ENCODE measurements at regions of chr1 and their contacts with region 1.

Region 1: DNA sequence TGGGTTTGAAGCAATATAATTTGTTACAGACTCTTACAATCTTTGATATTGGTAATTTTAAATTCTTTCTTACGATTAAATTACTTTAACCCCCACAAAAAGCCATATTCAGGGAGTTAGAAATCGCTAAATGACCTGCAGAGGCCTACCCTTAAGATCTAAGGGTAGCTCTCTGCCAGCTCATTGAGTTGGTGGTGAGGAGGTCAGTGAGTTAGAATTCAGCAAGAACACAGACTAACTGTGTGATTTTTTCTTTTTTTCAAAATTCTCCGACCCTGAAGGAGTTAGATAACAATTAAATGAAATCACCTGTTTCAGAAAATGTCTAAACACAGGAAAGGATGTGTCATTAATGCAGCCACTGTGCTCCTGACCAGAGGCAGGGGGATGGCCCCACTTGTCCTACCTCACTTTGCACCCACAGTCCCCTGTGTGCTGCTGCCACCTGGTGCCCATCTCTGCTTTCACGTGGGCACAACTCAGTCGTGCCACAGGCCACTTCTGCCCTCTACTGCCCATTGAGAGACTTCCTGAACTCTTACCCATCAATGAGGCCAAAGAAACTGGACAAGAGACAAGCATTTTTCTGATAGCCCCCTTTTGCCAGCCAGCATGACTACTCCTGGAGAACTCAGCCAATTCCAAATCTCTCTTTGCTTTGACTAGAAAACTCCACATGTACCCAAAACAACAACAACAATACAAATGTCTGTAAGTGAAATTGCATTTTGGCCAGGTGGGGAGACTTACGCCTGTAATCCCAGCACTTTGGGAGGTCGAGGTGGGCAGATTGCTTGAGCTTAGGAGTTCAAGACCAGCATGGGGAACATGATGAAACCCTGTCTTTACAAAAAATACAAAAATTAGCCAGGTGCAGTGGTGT is 8.4 kb downstream of the CFAP45 start:
- DNase-seq: peak; percentile 82
- H3K4me3 Mint-ChIP-seq: no peak overlapping the region
- H3K27ac Mint-ChIP-seq: no peak overlapping the region
- H3K4me1 Mint-ChIP-seq: peaks cover 19% of the 10 kb centered on the region
- H3K27me3 Mint-ChIP-seq: peaks cover 12% of the 10 kb centered on the region

Region 2: GRCh38 chr1:159780583-159781582 is 110.6 kb before region 1 on chr1 and contains the start of gene DUSP23:
- CTCF ChIA-PET with region 1: interaction called, 32 read pairs
- POLR2A ChIA-PET with region 1: interaction called, 5 read pairs
- DNase-seq: peak; percentile 97
- H3K4me3 Mint-ChIP-seq: peak within 1 kb of the TSS; percentile 79
- H3K27ac Mint-ChIP-seq: peak within 1 kb of the TSS; percentile 44
- H3K4me1 Mint-ChIP-seq: peaks cover 34% of the 10 kb centered on the region
- H3K27me3 Mint-ChIP-seq: no peaks in the 10 kb centered on the region
- total RNA-seq, gene DUSP23: 22.7 to 24.6 TPM

Region 3: DNA sequence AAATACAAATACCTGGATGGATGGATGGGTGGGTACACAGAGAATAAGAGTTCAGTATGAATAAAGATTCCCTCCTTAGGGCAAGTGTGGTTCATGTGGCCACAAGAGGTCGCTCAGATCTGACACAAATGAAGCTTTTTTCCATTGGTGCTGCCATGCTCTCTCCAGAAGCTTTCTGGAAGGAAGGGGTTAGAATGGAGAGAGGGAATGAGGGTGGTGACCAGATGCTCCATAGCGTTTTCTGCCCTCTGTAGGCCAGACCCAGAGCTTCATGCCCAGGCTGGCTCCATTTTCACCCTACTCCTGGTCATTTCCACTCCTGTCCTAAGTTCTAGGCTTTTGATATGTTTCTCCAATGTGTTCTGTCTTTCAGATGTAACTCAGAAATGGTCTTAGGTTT is 92.6 kb before region 1 on chr1:
- CTCF ChIA-PET with region 1: interaction called, 221 read pairs
- POLR2A ChIA-PET with region 1: interaction called, 11 read pairs
- DNase-seq: peak; percentile 52
- H3K4me3 Mint-ChIP-seq: no peak overlapping the region
- H3K27ac Mint-ChIP-seq: no peak overlapping the region
- H3K4me1 Mint-ChIP-seq: peaks cover 16% of the 10 kb centered on the region
- H3K27me3 Mint-ChIP-seq: peaks cover 41% of the 10 kb centered on the region

Region 4: GRCh38 chr1:159854693-159855192 is 36.8 kb before region 1 on chr1:
- CTCF ChIA-PET with region 1: interaction called, 21 read pairs
- POLR2A ChIA-PET with region 1: no interaction called
- DNase-seq: peak; percentile 82
- H3K4me3 Mint-ChIP-seq: peak overlapping the region; percentile 78
- H3K27ac Mint-ChIP-seq: peak overlapping the region; percentile 27
- H3K4me1 Mint-ChIP-seq: peaks cover 10% of the 10 kb centered on the region
- H3K27me3 Mint-ChIP-seq: no peaks in the 10 kb centered on the region

Region 5: GRCh38 chr1:159872881-159873280 is 18.6 kb before region 1 on chr1:
- CTCF ChIA-PET with region 1: interaction called, 10 read pairs
- POLR2A ChIA-PET with region 1: interaction called, 5 read pairs
- DNase-seq: no peak
- H3K4me3 Mint-ChIP-seq: no peak overlapping the region
- H3K27ac Mint-ChIP-seq: no peak overlapping the region
- H3K4me1 Mint-ChIP-seq: peaks cover 5% of the 10 kb centered on the region
- H3K27me3 Mint-ChIP-seq: peaks cover 3% of the 10 kb centered on the region

Region 6: GRCh38 chr1:159879977-159880376 is 11.5 kb before region 1 on chr1:
- CTCF ChIA-PET with region 1: interaction called, 11 read pairs
- POLR2A ChIA-PET with region 1: interaction called, 3 read pairs
- DNase-seq: no peak
- H3K4me3 Mint-ChIP-seq: no peak overlapping the region
- H3K27ac Mint-ChIP-seq: no peak overlapping the region
- H3K4me1 Mint-ChIP-seq: no peaks in the 10 kb centered on the region
- H3K27me3 Mint-ChIP-seq: peaks cover 3% of the 10 kb centered on the region

Region 7: DNA sequence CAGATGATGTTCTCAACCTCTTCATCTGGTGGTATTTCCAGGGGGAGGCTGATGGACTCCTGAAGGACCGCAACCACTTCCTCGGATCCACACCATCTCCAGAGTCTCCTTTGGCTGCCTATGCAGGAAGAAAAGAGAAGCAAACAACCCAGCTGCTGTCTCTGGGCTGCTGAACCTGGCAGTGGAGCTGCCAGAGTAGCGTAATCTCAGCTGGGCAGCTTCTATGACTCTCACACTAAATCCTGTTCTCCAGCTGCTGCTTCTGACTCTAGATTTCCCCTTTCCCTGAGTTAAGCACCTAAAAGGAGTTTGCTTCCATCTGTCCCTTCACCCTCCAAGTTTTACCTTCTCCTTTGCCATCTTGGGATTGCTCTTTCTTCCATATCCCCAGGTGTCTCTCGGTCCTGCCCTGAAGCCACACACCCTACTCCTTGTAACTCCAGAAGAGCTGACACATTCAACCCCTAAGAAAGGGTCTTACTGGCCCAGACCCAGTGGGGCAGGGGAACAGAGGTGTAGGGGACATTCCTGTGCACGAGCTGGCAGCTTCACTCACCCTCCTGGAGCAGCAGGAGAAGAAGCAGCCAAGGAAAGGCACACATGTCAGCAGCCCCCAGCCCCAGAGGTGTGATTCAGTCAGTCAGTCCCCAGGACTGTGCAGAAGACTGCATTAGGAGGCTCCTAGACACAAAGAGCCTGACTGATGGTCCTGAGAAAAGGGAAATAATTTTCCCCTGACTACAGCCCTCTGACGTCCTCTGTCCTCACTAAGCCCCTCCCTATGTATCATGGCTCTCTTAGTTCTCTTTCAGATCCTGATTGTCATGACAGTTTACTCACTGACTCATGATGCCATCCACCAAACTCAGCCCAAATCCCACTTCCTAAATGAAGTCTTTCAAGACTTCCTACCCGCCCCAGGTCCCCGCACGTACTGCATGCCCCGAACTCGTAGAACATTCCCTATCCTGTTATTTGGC is 62.3 kb after region 1 on chr1 and contains the start of gene SLAMF9:
- CTCF ChIA-PET with region 1: no interaction called
- POLR2A ChIA-PET with region 1: no interaction called
- DNase-seq: no peak
- H3K4me3 Mint-ChIP-seq: no peak within 1 kb of the TSS
- H3K27ac Mint-ChIP-seq: no peak within 1 kb of the TSS
- H3K4me1 Mint-ChIP-seq: peaks cover 7% of the 10 kb centered on the region
- H3K27me3 Mint-ChIP-seq: peaks cover 42% of the 10 kb centered on the region
- total RNA-seq, gene SLAMF9: not detected

Measured in activated CD4-positive, alpha-beta memory T cell treated with anti-CD3 and anti-CD28 coated beads, Interleukin-2, amount 10 ng/mL, durations not matched to agents 7 days and 5 days (primary cell).